HepG2 (cell line): ENCODE measurements at regions of chr6 and their contacts with region 1.

Region 1: DNA sequence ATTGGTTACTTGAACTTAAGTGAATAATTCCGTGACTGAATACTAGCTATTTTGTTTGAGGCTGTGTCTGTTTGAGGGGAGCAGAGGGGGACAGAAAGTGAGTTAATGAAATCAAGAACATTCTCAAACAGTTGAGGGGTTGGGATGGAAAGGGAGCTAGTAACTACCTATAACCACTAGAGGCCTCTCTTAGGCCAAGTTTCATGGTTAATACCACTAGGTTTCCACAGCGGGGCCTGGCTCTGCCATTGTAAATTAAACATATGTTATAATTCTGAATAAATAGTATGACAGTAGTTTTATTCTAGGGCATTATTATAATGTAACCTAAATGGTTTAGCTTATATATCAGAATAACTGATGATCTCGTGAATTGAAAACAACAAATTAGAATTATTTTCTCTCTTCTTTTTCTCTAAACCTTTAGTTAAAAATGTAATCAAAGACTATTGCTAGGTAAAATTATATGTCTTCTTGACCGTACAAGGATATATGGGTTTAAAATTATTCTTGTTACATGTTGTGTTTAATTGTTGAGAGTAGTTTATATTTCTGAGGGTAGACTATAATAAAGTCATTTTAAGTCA is 108.1 kb downstream of the BCKDHB start:
- DNase-seq: peak; percentile 29
- ATAC-seq: peak; percentile 97
- H3K4me3 ChIP-seq: no peak overlapping the region
- H3K27ac ChIP-seq: no peak overlapping the region
- H3K4me1 ChIP-seq: no peaks in the 10 kb centered on the region
- H3K27me3 ChIP-seq: no peaks in the 10 kb centered on the region
- CTCF ChIP-seq: peak; percentile 64
- EP300 ChIP-seq: no peak
- POLR2A ChIP-seq: no peak
- RAD21 ChIP-seq: peak; percentile 23; the same call in 1 of the 2 replicates

Region 2: GRCh38 chr6:79777713-79778579 is 436.6 kb before region 1 on chr6:
- CTCF ChIA-PET with region 1: no interaction called
- POLR2A ChIA-PET with region 1: no interaction called
- in situ Hi-C with region 1: no loop called
- intact Hi-C with region 1: no loop called
- DNase-seq: peak; percentile 43
- ATAC-seq: peak; percentile 94
- H3K4me3 ChIP-seq: peak overlapping the region; percentile 41 to 75 (median 48)
- H3K27ac ChIP-seq: no peak overlapping the region
- H3K4me1 ChIP-seq: peaks cover 18% of the 10 kb centered on the region
- H3K27me3 ChIP-seq: peaks cover 0 to 16% of the 10 kb centered on the region in 2 experiments; a peak in 1 of 5 replicates
- CTCF ChIP-seq: peak; percentile 97
- EP300 ChIP-seq: no peak
- POLR2A ChIP-seq: no peak
- RAD21 ChIP-seq: peak; percentile 65

Region 3: GRCh38 chr6:80338201-80338836 is 123.8 kb after region 1 on chr6:
- CTCF ChIA-PET with region 1: interaction called, 3 read pairs
- POLR2A ChIA-PET with region 1: no interaction called
- in situ Hi-C with region 1: no loop called
- intact Hi-C with region 1: loop called (anchors 2 kb)
- DNase-seq: peak; percentile 47
- ATAC-seq: peak; percentile 92
- H3K4me3 ChIP-seq: no peak overlapping the region
- H3K27ac ChIP-seq: no peak overlapping the region
- H3K4me1 ChIP-seq: no peaks in the 10 kb centered on the region
- H3K27me3 ChIP-seq: no peaks in the 10 kb centered on the region
- CTCF ChIP-seq: peak; percentile 83
- EP300 ChIP-seq: no peak
- POLR2A ChIP-seq: no peak
- RAD21 ChIP-seq: peak; percentile 61; the same call in 1 of the 2 replicates

Region 4: GRCh38 chr6:80605165-80605989 is 390.8 kb after region 1 on chr6:
- CTCF ChIA-PET with region 1: interaction called, 5 read pairs
- POLR2A ChIA-PET with region 1: no interaction called
- in situ Hi-C with region 1: no loop called
- intact Hi-C with region 1: loop called (anchors 10 kb)
- DNase-seq: peak; percentile 18
- ATAC-seq: peak; percentile 73
- H3K4me3 ChIP-seq: no peak overlapping the region
- H3K27ac ChIP-seq: no peak overlapping the region
- H3K4me1 ChIP-seq: no peaks in the 10 kb centered on the region
- H3K27me3 ChIP-seq: no peaks in the 10 kb centered on the region
- CTCF ChIP-seq: peak; percentile 51
- EP300 ChIP-seq: no peak
- POLR2A ChIP-seq: no peak
- RAD21 ChIP-seq: 0 out of 2 replicates have a peak, but pooled peaks have one; percentile 29

Region 5: GRCh38 chr6:81075974-81076373 is 861.4 kb after region 1 on chr6:
- CTCF ChIA-PET with region 1: no interaction called
- POLR2A ChIA-PET with region 1: no interaction called
- in situ Hi-C with region 1: no loop called
- intact Hi-C with region 1: loop called (anchors 10 kb)
- DNase-seq: peak; percentile 9
- ATAC-seq: peak; percentile 75
- H3K4me3 ChIP-seq: no peak overlapping the region
- H3K27ac ChIP-seq: no peak overlapping the region
- H3K4me1 ChIP-seq: no peaks in the 10 kb centered on the region
- H3K27me3 ChIP-seq: no peaks in the 10 kb centered on the region
- CTCF ChIP-seq: peak; percentile 50
- EP300 ChIP-seq: no peak
- POLR2A ChIP-seq: no peak
- RAD21 ChIP-seq: no peak

Region 6: DNA sequence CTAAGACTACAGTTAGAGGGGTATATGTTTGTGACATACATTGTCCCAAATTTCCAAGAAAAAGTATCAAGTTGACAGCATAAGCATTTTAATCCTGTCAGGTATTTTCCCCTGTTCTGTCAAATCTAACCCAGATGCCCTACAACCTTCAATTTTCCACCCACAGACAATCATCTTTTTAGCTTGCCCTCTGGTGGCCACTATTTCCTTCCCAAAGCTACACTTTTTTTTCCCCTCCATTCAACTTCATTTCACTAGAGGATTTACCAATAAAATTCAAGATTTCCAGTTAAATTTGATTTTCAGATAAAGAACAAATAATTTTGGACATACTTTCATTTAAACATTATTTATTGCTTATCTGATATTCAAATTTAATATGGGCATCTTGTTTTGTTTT is 1251.3 kb after region 1 on chr6:
- CTCF ChIA-PET with region 1: no interaction called
- POLR2A ChIA-PET with region 1: no interaction called
- in situ Hi-C with region 1: no loop called
- intact Hi-C with region 1: loop called (anchors 5 kb)
- DNase-seq: peak; percentile 2
- ATAC-seq: peak; percentile 44; the same call in 1 of the 3 replicates
- H3K4me3 ChIP-seq: no peak overlapping the region
- H3K27ac ChIP-seq: no peak overlapping the region
- H3K4me1 ChIP-seq: no peaks in the 10 kb centered on the region
- H3K27me3 ChIP-seq: no peaks in the 10 kb centered on the region
- CTCF ChIP-seq: peak; percentile 57
- EP300 ChIP-seq: no peak
- POLR2A ChIP-seq: no peak
- RAD21 ChIP-seq: 0 out of 2 replicates have a peak, but pooled peaks have one; percentile 25